Activated CD4-positive, alpha-beta T cell treated with anti-CD3 and anti-CD28 coated beads, Interleukin-2, amount 10 ng/mL, durations not matched to agents 24 days and 14 days (primary cell): ENCODE measurements at regions of chr16 and their contacts with region 1.

Region 1: GRCh38 chr16:29973384-29974246 is at the start of gene TAOK2:
- DNase-seq: peak; percentile 99
- H3K4me3 Mint-ChIP-seq: peak within 1 kb of the TSS; percentile 91
- H3K27ac Mint-ChIP-seq: peak within 1 kb of the TSS; percentile 95
- H3K4me1 Mint-ChIP-seq: peaks cover 30% of the 10 kb centered on the region
- H3K27me3 Mint-ChIP-seq: no peaks in the 10 kb centered on the region
- total RNA-seq, gene TAOK2: 35.8 and 38.7 TPM in 2 replicates

Region 2: GRCh38 chr16:29961479-29962343 is 11.9 kb before region 1 on chr16 and contains the start of gene TMEM219:
- intact Hi-C with region 1: loop called (anchors 1 kb)
- DNase-seq: peak; percentile 99
- H3K4me3 Mint-ChIP-seq: peak within 1 kb of the TSS; percentile 92
- H3K27ac Mint-ChIP-seq: peak within 1 kb of the TSS; percentile 87
- H3K4me1 Mint-ChIP-seq: peaks cover 15% of the 10 kb centered on the region
- H3K27me3 Mint-ChIP-seq: no peaks in the 10 kb centered on the region
- total RNA-seq, gene TMEM219: 41.7 and 43.8 TPM in 2 replicates

Region 3: GRCh38 chr16:31016018-31016417 is 1042.4 kb after region 1 on chr16:
- intact Hi-C with region 1: no loop called
- DNase-seq: no peak
- H3K4me3 Mint-ChIP-seq: no peak overlapping the region
- H3K27ac Mint-ChIP-seq: no peak overlapping the region
- H3K4me1 Mint-ChIP-seq: peaks cover 6% of the 10 kb centered on the region
- H3K27me3 Mint-ChIP-seq: peaks cover 31% of the 10 kb centered on the region